ENCODE measurements at regions of chr11 and their contacts with region 1.

Region 1: DNA sequence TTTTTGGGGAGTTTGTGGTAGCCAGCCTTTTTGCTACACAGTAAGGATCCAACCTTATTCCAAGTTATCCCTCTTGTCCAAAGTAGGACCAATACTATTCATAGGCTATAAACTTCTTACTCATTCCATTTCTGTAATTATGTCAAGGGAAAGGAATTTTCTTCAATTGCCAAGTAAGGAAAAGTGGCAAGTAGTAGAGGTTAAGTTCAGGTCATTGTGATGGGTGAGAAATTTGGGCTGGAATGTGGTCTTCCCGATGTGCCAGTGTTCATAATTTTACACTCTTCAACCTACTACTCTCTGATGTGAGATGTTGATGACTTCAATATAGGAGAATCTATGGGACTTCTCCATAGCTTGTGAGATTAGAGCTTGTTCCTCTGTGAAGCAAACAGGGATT is 648.8 kb downstream of the METTL15 start:
- DNase-seq: no peak
- H3K4me3 ChIP-seq: no peak overlapping the region
- H3K4me3 Mint-ChIP-seq: no peak overlapping the region
- H3K27ac Mint-ChIP-seq: no peak overlapping the region
- H3K4me1 ChIP-seq: peaks cover 36% of the 10 kb centered on the region
- H3K4me1 Mint-ChIP-seq: peaks cover 10% of the 10 kb centered on the region
- H3K27me3 ChIP-seq: no peaks in the 10 kb centered on the region
- H3K27me3 Mint-ChIP-seq: no peaks in the 10 kb centered on the region
- CTCF ChIP-seq: no peak

Region 2: DNA sequence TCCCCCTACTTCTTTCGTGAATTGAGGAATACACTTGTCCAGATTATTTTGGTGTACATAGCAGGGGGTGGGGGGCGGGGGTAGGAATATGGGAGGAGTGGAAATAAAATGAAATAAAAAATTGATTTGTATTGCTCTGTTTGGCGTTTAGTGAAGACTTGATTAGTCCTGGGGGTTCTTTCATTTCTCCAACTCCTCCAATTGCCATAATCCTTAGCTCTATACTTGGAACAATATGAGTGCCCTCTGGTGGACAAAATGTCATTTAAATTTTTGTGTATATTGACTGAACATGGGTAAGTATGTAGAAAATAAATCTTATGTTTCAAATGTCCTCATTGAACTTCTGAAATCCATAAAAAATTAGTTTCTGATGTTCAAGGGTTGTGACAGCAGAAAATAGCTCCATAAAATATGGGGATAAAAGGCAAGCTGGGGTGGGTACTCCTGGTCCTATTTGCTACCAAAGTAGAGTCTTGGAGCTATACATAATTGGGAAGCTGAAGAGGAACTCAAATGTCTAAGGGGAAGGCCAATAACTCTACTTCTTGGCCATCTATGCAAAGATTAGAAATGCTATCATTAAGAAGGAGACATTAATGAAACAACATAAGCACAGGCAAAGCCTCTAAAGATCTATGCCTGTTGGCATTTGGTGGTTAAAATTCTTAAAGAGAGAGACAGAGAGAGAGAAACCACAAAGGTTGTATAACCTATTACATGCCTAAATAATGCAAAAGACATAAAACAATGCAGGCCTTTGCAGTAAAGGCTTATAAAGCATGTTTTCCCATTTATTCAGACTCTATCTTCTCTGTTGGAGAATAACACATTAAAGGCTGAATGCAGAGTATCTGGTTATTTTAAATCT is 227.2 kb before region 1 on chr11:
- CTCF ChIA-PET with region 1: no interaction called
- POLR2A ChIA-PET with region 1: no interaction called
- intact Hi-C with region 1: loop called (anchors 1 kb)
- DNase-seq: peak in 1 of 2 experiments; percentile 45
- H3K4me3 ChIP-seq: no peak overlapping the region
- H3K4me3 Mint-ChIP-seq: no peak overlapping the region
- H3K27ac Mint-ChIP-seq: no peak overlapping the region
- H3K4me1 ChIP-seq: no peaks in the 10 kb centered on the region
- H3K4me1 Mint-ChIP-seq: no peaks in the 10 kb centered on the region
- H3K27me3 ChIP-seq: no peaks in the 10 kb centered on the region
- H3K27me3 Mint-ChIP-seq: no peaks in the 10 kb centered on the region
- CTCF ChIP-seq: peak; percentile 39 to 47

Region 3: DNA sequence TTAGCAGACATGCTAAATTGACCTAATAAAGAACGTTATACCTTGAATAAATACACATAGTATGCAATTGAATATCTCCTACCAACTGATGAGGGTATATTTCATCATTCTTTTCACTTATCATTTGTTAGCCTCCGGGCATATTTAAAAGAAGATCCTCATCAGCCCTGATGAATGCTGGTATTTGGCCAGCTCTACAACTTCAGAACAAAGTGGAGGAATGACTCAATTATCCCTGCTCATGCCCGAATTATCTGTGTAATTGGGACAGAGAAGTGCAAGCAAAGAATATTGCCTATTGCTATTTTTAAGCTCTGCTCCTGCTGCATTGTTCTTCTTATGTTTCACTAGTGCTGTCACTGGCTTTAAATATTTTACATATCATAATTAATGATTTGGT is 26.6 kb before region 1 on chr11:
- CTCF ChIA-PET with region 1: no interaction called
- POLR2A ChIA-PET with region 1: no interaction called
- intact Hi-C with region 1: no loop called
- DNase-seq: no peak
- H3K4me3 ChIP-seq: no peak overlapping the region
- H3K4me3 Mint-ChIP-seq: no peak overlapping the region
- H3K27ac Mint-ChIP-seq: no peak overlapping the region
- H3K4me1 ChIP-seq: no peaks in the 10 kb centered on the region
- H3K4me1 Mint-ChIP-seq: peaks cover 8% of the 10 kb centered on the region
- H3K27me3 ChIP-seq: no peaks in the 10 kb centered on the region
- H3K27me3 Mint-ChIP-seq: no peaks in the 10 kb centered on the region
- CTCF ChIP-seq: no peak

Region 4: DNA sequence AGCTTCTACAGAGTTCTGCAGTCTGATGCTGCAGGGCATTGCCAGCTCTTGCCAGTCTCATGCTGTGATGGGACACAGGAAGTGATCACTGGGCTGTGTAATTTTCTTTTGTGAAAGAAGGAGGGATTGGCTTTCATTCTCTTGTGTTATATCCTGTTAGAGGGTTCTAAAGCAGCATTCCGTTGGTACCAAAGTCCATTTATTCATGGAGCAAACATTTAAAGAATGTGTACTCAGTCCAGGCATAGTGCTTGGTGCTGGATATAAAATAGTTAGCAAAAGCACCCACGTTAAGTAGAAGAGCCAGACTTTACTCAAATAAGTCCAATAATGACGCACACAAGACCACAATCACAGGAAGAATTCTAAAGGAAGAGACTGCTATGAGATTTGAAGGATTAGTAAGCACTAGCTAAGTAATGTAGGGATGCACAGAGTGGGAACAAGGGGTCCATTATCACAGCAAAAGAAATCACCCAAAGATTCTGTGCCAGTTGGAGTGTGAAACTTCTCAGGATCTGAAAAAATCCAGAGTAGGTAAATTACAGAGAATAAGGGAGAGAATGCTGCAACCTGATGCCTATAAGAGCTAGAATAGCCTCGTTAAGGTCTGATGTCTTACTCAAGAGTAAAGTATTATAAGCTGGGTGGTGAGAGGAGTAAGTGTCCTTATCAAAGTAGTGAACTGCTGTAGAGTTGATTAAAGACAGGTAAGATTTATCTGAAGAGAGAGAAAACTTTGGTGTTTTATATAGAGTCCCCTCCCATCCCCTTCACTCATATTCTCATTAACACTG is 79.5 kb after region 1 on chr11:
- CTCF ChIA-PET with region 1: no interaction called
- POLR2A ChIA-PET with region 1: no interaction called
- intact Hi-C with region 1: loop called (anchors 5 kb)
- DNase-seq: peak; percentile 34 to 46
- H3K4me3 ChIP-seq: no peak overlapping the region
- H3K4me3 Mint-ChIP-seq: peak overlapping the region; percentile 61
- H3K27ac Mint-ChIP-seq: peak overlapping the region; percentile 93
- H3K4me1 ChIP-seq: peaks cover 33% of the 10 kb centered on the region
- H3K4me1 Mint-ChIP-seq: peaks cover 23% of the 10 kb centered on the region
- H3K27me3 ChIP-seq: no peaks in the 10 kb centered on the region
- H3K27me3 Mint-ChIP-seq: no peaks in the 10 kb centered on the region
- CTCF ChIP-seq: no peak